ENCODE measurements at regions of chr11 and their contacts with region 1.

Region 1: DNA sequence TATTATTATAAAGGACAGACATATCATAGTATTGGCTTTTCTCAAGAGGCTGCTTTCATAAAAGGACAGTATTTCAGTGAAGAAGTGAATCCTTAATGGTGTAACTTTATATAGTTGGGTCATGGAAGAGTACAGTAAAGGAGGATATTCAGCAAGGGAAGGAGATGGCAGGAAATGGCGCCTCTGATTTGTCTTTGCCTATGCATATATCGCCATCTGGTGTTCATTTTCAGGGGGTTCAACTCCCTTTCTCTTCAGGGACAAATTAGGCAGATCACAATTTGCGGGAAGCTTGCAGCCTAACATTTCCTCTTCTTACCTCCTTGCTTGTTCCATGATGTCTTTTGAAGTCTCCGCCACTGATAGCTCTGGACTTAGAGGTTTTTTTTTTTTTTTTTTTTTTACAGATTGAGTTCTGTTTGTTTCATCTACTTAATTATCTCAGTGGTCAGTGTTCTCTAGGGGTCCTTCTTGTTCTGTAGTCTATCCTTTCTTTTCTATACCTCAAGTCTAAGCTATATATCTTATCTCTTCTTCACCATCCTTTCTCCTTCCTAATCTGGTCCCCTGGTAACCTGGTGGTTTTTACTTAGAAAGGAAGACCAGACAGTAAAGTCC is 21.8 kb upstream of the RRM1 start:
- DNase-seq: peak in 7 of 9 experiments; percentile 29 to 87 (median 46)
- ATAC-seq: peak; percentile 83
- H3K4me3 ChIP-seq: no peak overlapping the region
- H3K4me3 Mint-ChIP-seq: no peak overlapping the region
- H3K27ac ChIP-seq: peak overlapping the region in 1 of 2 experiments; percentile 49
- H3K27ac Mint-ChIP-seq: peak overlapping the region; percentile 87
- H3K4me1 ChIP-seq: peaks cover 37% of the 10 kb centered on the region
- H3K4me1 Mint-ChIP-seq: peaks cover 53% of the 10 kb centered on the region
- H3K27me3 ChIP-seq: no peaks in the 10 kb centered on the region
- H3K27me3 Mint-ChIP-seq: no peaks in the 10 kb centered on the region
- CTCF ChIP-seq: peak; percentile 87

Region 2: GRCh38 chr11:3775736-3776406 is 296.9 kb before region 1 on chr11:
- CTCF ChIA-PET with region 1: interaction called, 18 read pairs
- POLR2A ChIA-PET with region 1: no interaction called
- intact Hi-C with region 1: loop called (anchors 5 kb)
- DNase-seq: no peak
- ATAC-seq: no peak
- H3K4me3 ChIP-seq: no peak overlapping the region
- H3K4me3 Mint-ChIP-seq: no peak overlapping the region
- H3K27ac ChIP-seq: no peak overlapping the region
- H3K27ac Mint-ChIP-seq: no peak overlapping the region
- H3K4me1 ChIP-seq: no peaks in the 10 kb centered on the region
- H3K4me1 Mint-ChIP-seq: peaks cover 6% of the 10 kb centered on the region
- H3K27me3 ChIP-seq: no peaks in the 10 kb centered on the region
- H3K27me3 Mint-ChIP-seq: no peaks in the 10 kb centered on the region
- CTCF ChIP-seq: no peak

Region 3: DNA sequence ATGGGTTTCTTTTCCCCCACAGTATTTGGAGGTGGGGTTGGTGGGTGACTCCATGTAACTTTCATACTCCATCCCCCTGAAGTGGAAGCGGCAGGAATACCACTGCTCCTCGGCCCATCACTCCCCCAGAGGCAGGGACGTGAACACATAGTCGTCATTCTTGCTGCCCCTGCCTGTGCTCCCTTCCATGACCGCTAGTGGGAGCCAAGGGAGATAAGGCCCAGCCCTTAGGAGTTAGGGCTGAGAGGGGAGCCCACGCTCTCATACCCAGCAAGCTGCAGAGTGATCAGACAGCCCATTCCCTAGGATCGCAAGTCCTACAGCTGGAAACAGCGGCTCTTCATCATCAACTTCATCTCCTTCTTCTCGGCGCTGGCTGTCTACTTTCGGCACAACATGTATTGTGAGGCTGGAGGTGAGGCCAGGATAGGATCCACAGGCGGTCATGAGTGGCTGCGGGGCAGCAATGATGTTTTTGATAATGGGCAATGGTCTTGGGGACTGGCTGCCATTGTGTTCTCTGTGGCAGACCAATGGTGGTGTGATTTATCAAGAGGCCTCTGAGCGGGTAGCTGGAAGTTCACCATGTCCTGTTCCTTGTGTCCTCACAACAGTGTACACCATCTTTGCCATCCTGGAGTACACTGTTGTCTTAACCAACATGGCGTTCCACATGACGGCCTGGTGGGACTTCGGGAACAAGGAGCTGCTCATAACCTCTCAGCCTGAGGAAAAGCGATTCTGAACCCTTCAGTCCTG is 247.9 kb before region 1 on chr11:
- CTCF ChIA-PET with region 1: interaction called, 17 read pairs
- POLR2A ChIA-PET with region 1: no interaction called
- intact Hi-C with region 1: loop called (anchors 1 kb)
- DNase-seq: peak; percentile 67 to 90 (median 85)
- ATAC-seq: peak; percentile 99
- H3K4me3 ChIP-seq: no peak overlapping the region
- H3K4me3 Mint-ChIP-seq: peak overlapping the region; percentile 37
- H3K27ac ChIP-seq: peak overlapping the region in 1 of 2 experiments; percentile 56
- H3K27ac Mint-ChIP-seq: peak overlapping the region; percentile 89
- H3K4me1 ChIP-seq: peaks cover 10% of the 10 kb centered on the region
- H3K4me1 Mint-ChIP-seq: peaks cover 40% of the 10 kb centered on the region
- H3K27me3 ChIP-seq: no peaks in the 10 kb centered on the region
- H3K27me3 Mint-ChIP-seq: no peaks in the 10 kb centered on the region
- CTCF ChIP-seq: peak; percentile 68

Region 4: GRCh38 chr11:3849297-3849874 is 223.4 kb before region 1 on chr11:
- CTCF ChIA-PET with region 1: interaction called, 548 read pairs
- POLR2A ChIA-PET with region 1: interaction called, 27 read pairs
- intact Hi-C with region 1: loop called (anchors 1 kb)
- DNase-seq: peak in 5 of 9 experiments; percentile 24 to 80 (median 60)
- ATAC-seq: peak; percentile 58
- H3K4me3 ChIP-seq: no peak overlapping the region
- H3K4me3 Mint-ChIP-seq: no peak overlapping the region
- H3K27ac ChIP-seq: no peak overlapping the region
- H3K27ac Mint-ChIP-seq: no peak overlapping the region
- H3K4me1 ChIP-seq: peaks cover 23% of the 10 kb centered on the region
- H3K4me1 Mint-ChIP-seq: peaks cover 35% of the 10 kb centered on the region
- H3K27me3 ChIP-seq: no peaks in the 10 kb centered on the region
- H3K27me3 Mint-ChIP-seq: no peaks in the 10 kb centered on the region
- CTCF ChIP-seq: peak; percentile 82

Region 5: DNA sequence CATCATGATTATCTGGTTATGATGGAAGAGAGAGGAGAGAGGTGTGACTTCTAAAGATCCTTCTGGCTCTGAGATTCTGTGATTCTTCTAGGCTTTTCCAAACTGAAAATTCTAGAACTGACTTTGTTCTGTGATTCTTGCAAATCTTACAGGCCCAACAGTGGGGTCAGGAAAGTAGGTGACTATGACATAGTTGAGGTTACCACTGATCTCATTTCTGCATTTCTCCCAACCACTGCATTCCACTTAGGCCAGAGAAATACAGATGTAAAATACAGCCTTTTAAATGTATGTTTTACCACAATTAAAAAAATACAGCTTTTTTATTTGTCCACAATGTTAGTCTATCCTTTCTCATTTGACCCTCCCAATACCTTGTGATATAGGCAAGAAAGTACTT is 133.6 kb before region 1 on chr11:
- CTCF ChIA-PET with region 1: interaction called, 35 read pairs
- POLR2A ChIA-PET with region 1: no interaction called
- intact Hi-C with region 1: loop called (anchors 1 to 2 kb)
- DNase-seq: no peak
- ATAC-seq: peak; percentile 26
- H3K4me3 ChIP-seq: no peak overlapping the region
- H3K4me3 Mint-ChIP-seq: no peak overlapping the region
- H3K27ac ChIP-seq: no peak overlapping the region
- H3K27ac Mint-ChIP-seq: peak overlapping the region; percentile 78
- H3K4me1 ChIP-seq: peaks cover 61% of the 10 kb centered on the region
- H3K4me1 Mint-ChIP-seq: peaks cover 92% of the 10 kb centered on the region
- H3K27me3 ChIP-seq: no peaks in the 10 kb centered on the region
- H3K27me3 Mint-ChIP-seq: no peaks in the 10 kb centered on the region
- CTCF ChIP-seq: no peak

Region 6: DNA sequence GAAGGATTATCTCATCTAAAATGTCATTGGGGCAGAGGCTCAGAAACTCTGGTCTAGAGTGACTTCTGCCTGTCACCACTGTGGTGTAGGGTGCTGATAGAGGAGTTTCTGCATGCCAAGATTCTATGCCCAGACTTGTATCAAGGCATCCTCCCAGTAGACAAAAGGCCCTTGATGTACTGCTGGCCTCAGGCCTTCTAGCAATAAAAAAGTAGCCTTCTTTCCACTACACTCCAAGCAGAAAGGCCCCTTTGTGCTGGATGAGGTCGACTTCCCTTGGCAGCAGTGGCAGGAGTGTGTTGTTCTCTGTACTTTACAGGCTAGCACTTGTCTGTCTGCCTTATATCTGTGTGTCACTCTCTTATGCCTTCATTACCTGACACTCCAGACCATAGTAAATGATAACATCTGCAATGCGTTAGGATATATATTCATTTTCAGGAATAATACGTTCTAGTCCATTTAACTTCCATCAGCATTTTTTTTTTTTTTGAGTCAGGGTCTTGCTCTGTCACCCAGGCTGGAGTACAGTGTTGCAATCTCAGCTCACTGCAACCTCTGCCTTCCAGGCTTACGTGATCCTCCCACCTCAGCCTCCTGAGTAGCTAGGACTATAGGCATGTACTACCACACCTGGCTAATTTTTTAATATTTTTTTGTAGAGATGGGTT is 27.7 kb before region 1 on chr11:
- CTCF ChIA-PET with region 1: interaction called, 10 read pairs
- POLR2A ChIA-PET with region 1: interaction called, 3 read pairs
- intact Hi-C with region 1: no loop called
- DNase-seq: no peak
- ATAC-seq: no peak
- H3K4me3 ChIP-seq: no peak overlapping the region
- H3K4me3 Mint-ChIP-seq: no peak overlapping the region
- H3K27ac ChIP-seq: no peak overlapping the region
- H3K27ac Mint-ChIP-seq: peak overlapping the region; percentile 70
- H3K4me1 ChIP-seq: peaks cover 8% of the 10 kb centered on the region
- H3K4me1 Mint-ChIP-seq: peaks cover 45% of the 10 kb centered on the region
- H3K27me3 ChIP-seq: no peaks in the 10 kb centered on the region
- H3K27me3 Mint-ChIP-seq: no peaks in the 10 kb centered on the region
- CTCF ChIP-seq: no peak

Region 7: DNA sequence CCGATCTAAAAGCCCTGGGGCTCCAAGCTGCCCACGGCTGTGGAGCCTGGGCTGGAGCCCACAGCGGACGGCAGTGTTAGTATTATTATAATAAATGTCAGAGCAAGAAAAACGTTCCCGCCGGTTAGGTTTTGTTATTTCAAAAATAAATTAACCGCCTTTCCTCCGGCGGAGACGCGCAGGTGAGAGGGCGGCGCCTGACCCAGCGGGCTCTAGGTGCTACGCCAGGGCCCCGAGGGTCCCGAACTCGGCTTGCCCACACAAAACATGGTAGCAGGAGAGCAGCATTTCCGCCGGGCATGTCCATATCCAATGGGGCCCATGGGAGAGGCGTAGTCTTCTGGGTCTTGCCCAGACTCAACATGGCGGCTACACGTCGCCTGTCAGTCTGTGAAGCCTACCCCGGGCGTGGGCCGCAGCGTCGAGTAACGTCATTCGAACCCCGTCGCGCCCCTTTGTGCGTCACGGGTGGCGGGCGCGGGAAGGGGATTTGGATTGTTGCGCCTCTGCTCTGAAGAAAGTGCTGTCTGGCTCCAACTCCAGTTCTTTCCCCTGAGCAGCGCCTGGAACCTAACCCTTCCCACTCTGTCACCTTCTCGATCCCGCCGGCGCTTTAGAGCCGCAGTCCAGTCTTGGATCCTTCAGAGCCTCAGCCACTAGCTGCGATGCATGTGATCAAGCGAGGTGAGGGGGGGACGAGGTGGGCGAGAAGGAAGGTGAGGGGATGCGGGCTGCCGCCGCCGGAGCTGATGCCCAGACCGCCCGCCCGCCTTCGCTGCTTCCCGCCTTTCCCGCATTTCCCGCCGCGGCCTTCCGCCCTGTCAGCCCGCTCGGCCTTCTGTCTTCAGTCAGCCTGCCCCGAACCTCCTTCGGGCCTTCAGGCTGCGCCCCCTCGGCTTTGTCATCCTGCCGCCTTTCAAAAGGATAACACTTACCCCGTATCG is 21.8 kb after region 1 on chr11 and contains the start of gene RRM1:
- CTCF ChIA-PET with region 1: interaction called, 18 read pairs
- POLR2A ChIA-PET with region 1: no interaction called
- intact Hi-C with region 1: no loop called
- DNase-seq: peak; percentile 84 to 97 (median 92)
- ATAC-seq: peak; percentile 90
- H3K4me3 ChIP-seq: peak within 1 kb of the TSS; percentile 74 to 78
- H3K4me3 Mint-ChIP-seq: peak within 1 kb of the TSS; percentile 98
- H3K27ac ChIP-seq: peak within 1 kb of the TSS; percentile 81 to 86
- H3K27ac Mint-ChIP-seq: peak within 1 kb of the TSS; percentile 99
- H3K4me1 ChIP-seq: peaks cover 49% of the 10 kb centered on the region
- H3K4me1 Mint-ChIP-seq: peaks cover 79% of the 10 kb centered on the region
- H3K27me3 ChIP-seq: no peaks in the 10 kb centered on the region
- H3K27me3 Mint-ChIP-seq: no peaks in the 10 kb centered on the region
- CTCF ChIP-seq: no peak
- total RNA-seq, gene RRM1: 53.1 to 57.3 TPM

Region 8: DNA sequence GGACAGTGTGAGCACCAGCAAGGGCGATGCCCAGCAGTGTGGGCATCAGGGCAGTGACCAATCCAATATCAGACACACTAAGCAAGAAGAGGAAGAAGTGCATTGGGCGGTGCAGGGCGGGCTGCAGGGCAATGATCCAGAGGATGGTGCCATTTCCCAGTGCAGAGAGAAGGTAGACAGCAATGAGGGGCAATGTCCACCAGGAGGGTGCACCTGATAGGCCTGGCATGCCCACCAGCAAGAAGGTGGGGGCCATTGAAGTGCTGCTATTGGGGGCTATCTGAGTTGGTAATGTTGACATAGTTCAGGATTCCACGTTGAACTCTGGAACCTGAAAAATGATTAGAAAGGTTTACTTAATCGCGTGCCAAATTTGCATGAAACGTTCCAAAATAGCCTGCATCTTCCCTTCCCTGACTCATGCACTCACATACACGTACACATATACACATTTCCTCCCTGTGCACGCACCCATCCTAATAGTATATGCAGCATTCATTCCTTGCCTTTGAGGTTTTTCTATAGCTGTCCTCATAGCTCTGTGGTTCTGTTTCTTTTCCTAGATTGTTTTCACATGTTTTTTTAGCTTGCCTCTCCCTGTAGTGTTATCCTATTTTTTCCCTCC is 776.2 kb after region 1 on chr11 and contains the start of gene OR51S1:
- CTCF ChIA-PET with region 1: no interaction called
- POLR2A ChIA-PET with region 1: no interaction called
- intact Hi-C with region 1: no loop called
- DNase-seq: no peak
- ATAC-seq: no peak
- H3K4me3 ChIP-seq: no peak within 1 kb of the TSS
- H3K4me3 Mint-ChIP-seq: no peak within 1 kb of the TSS
- H3K27ac ChIP-seq: no peak within 1 kb of the TSS
- H3K27ac Mint-ChIP-seq: no peak within 1 kb of the TSS
- H3K4me1 ChIP-seq: no peaks in the 10 kb centered on the region
- H3K4me1 Mint-ChIP-seq: no peaks in the 10 kb centered on the region
- H3K27me3 ChIP-seq: no peaks in the 10 kb centered on the region
- H3K27me3 Mint-ChIP-seq: peaks cover 9% of the 10 kb centered on the region
- CTCF ChIP-seq: no peak
- total RNA-seq, gene OR51S1: not detected